Cardiac septum (tissue), 1 donor: ENCODE measurements at regions of chr3 and their contacts with region 1.

Region 1: GRCh38 chr3:119034256-119035013 is at the start of gene IGSF11:
- DNase-seq: peak; percentile 77
- total RNA-seq, gene IGSF11: 1.8 TPM

Region 2: DNA sequence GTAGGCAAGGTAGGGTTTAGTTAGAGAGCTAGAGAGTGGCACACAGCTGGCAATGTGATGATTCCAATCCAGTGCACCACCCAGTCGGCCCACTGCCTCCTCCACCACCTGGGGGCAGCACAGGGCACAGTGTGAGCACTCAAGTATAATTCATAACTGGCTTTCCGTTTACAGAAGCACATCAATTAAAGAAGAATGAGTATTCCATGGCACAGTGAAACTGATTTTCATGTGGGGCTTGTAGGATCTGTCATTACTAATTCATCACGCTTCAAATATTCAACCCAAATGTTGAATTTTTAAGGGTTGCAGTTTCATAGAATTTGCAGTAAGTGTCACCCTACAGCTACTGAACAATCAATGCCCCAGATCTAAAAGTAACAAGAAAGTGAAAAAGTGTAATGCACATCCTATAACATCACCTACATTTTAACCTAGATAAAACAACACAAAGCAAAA is 149.7 kb before region 1 on chr3:
- intact Hi-C with region 1: loop called (anchors 1 kb)
- DNase-seq: no peak

Region 3: DNA sequence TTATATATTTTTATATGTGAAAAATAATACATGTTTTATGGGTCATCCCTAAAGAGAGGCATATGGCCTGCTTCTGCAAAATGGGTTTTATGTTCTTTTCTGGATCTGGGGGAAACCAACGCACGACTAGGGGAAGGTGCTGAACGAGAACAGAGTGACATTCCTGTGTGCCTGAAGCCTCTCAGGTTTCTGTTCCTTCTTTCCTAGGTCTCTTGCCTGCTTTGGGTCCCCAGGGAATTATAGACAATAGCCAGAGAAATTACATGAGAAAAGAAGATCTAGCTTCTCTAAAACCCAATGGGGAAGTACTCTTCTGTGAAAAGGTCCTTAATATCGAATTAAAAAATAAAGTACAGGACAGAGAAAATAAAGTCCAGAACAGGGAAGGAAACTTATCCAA is 66.3 kb before region 1 on chr3:
- intact Hi-C with region 1: loop called (anchors 5 kb)
- DNase-seq: no peak

Region 4: GRCh38 chr3:119098619-119099222 is 64.3 kb after region 1 on chr3:
- intact Hi-C with region 1: loop called (anchors 2 kb)
- DNase-seq: no peak